Activated T-helper 2 cell treated with anti-CD3 and anti-CD28 coated beads, Interferon-gamma antibody, Interleukin-2, Interleukin-4, amounts not matched to agents 10 μg/mL and 5 μg/mL and 100 μg/mL, durations not matched to agents 14 hours and 24 hours and 36 hours (primary cell): ENCODE measurements at regions of chr19 and their contacts with region 1.

Region 1: GRCh38 chr19:56121180-56122167 is at the start of gene ZNF787:
- DNase-seq: peak; percentile 94
- H3K4me3 Mint-ChIP-seq: peak within 1 kb of the TSS; percentile 87
- H3K27ac Mint-ChIP-seq: peak within 1 kb of the TSS; percentile 95
- H3K4me1 Mint-ChIP-seq: peaks cover 19% of the 10 kb centered on the region
- H3K27me3 Mint-ChIP-seq: no peaks in the 10 kb centered on the region
- total RNA-seq, gene ZNF787: 35.7 and 37.8 TPM in 2 replicates

Region 2: DNA sequence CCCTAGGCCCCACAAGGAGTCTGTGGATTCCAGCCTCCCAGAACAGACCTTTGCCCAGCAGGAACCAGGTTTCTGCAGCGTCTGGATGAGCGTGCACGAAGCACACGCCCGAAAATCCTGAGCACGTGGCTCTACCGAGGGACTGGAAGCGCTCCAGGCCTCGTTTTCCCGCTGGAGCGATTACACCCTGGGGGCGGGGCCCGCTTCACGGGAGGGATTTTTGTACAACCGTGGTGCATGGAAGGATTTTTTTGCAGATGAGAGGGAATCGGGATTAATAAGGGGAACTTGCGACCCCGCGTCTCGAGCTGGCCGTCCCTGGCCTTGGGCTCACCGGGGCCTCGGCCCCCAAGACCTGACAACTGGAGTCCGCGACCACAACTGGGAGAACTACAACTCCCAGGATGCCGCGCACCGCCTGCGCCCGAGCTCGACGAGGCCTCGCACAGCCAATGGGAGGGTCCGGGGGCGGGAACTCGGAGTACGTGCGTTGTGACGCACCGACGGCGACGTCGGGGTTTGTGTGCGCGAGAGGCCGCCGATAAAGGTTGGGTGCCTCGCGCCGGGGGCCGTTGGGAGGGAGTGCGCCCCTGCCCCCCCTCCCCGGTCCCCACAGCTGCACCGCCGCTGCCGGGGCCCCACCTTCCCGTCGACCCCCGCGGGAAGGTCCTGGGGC is 645.2 kb before region 1 on chr19 and contains the start of gene ZNF628:
- intact Hi-C with region 1: loop called (anchors 5 kb)
- DNase-seq: peak; percentile 96
- H3K4me3 Mint-ChIP-seq: peak within 1 kb of the TSS; percentile 88
- H3K27ac Mint-ChIP-seq: peak within 1 kb of the TSS; percentile 90
- H3K4me1 Mint-ChIP-seq: peaks cover 20% of the 10 kb centered on the region
- H3K27me3 Mint-ChIP-seq: no peaks in the 10 kb centered on the region
- total RNA-seq, gene ZNF628: 8.6 and 9.5 TPM in 2 replicates

Region 3: DNA sequence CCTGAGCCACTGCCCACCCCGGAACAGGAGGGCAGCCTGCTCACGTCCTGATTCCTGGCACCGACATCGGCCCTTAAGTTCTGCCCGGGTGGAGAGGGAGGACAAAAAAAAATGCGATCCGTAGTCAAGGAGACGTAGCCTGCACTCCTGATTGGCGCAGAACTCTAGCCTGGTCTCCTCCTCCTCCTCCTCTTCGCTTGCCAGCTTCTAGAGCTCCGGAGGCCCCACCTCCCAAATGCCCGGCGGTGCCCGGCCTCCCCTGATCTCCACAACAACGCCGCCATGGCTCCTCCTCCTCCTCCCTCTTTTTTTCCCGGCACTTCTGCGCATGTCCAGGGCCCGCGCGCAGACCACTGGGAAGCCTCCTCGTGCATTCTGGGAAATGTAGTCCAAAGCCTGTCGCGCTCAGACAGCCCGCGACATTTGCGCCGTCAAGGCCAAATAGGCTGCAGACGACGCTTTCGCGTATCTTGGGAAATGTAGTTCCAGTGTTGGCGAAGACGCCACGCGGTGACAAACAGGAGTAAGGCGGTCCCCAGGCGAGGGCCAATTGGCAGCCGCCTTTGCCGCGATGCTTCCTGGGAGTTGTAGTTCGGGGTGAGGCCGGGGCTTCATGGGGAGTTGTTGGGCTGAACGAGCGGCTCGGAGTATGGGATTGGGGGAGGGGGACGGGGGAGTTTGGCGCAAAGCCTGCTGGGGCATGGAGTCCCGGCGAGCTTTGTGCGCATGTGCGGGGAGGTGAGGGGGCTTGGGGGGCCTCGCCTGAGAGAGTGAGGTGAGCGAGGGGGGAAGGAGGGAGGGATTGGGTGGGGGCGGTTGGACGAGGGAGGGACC is 19.3 kb after region 1 on chr19 and contains the start of gene ZNF444:
- intact Hi-C with region 1: loop called (anchors 1 kb)
- DNase-seq: peak; percentile 99
- H3K4me3 Mint-ChIP-seq: peak within 1 kb of the TSS; percentile 83
- H3K27ac Mint-ChIP-seq: peak within 1 kb of the TSS; percentile 81
- H3K4me1 Mint-ChIP-seq: peaks cover 21% of the 10 kb centered on the region
- H3K27me3 Mint-ChIP-seq: no peaks in the 10 kb centered on the region
- total RNA-seq, gene ZNF444: 30.3 and 35.5 TPM in 2 replicates